ENCODE measurements at regions of chr18 and their contacts with region 1.

Region 1: DNA sequence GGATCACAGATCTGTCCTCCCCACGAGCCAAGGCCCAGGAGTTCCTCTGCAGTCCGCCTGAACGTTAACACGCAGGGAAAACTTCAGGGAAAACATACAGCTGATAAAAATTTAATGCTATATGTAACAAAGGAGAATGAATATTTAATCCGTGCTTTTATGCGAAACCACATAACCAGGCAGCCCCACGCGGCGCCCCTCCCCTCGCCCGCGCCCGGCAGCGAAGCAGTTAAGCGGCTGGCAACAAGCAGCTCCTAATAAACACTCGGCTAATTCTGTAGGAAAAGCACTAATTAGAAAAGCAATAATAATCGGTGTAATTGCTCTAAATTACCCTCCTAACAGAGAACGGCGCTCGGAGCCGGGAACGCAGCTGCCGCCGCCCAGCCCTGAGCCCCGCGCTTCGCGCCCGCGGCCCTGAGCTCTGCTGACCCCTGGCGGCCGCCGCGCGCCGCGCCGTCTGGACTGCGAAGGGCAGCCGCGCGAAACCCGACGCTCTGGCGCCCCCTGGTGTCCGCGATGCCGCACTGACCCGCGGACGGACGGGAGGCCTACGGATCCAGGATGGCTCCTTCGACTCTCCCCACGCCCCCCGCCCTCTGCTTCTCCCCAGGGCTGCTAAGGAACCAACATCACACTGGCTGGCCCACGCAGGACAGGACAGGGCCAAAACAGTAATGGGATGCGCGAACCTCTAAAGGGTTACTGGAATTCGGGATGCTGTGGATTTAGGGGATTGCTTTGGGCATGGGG is 181.4 kb downstream of the SMAD2 start:
- DNase-seq: peak; percentile 91
- ATAC-seq: peak; percentile 97
- H3K4me3 Mint-ChIP-seq: peak overlapping the region; percentile 10
- H3K27ac Mint-ChIP-seq: no peak overlapping the region
- H3K4me1 Mint-ChIP-seq: no peaks in the 10 kb centered on the region
- H3K27me3 Mint-ChIP-seq: peaks cover 3% of the 10 kb centered on the region

Region 2: GRCh38 chr18:47050468-47050867 is 698.6 kb before region 1 on chr18:
- CTCF ChIA-PET with region 1: interaction called, 4 read pairs
- POLR2A ChIA-PET with region 1: no interaction called
- intact Hi-C with region 1: loop called (anchors 1 to 2 kb)
- DNase-seq: peak; percentile 10
- ATAC-seq: peak; percentile 47
- H3K4me3 Mint-ChIP-seq: no peak overlapping the region
- H3K27ac Mint-ChIP-seq: no peak overlapping the region
- H3K4me1 Mint-ChIP-seq: no peaks in the 10 kb centered on the region
- H3K27me3 Mint-ChIP-seq: peaks cover 3% of the 10 kb centered on the region

Region 3: DNA sequence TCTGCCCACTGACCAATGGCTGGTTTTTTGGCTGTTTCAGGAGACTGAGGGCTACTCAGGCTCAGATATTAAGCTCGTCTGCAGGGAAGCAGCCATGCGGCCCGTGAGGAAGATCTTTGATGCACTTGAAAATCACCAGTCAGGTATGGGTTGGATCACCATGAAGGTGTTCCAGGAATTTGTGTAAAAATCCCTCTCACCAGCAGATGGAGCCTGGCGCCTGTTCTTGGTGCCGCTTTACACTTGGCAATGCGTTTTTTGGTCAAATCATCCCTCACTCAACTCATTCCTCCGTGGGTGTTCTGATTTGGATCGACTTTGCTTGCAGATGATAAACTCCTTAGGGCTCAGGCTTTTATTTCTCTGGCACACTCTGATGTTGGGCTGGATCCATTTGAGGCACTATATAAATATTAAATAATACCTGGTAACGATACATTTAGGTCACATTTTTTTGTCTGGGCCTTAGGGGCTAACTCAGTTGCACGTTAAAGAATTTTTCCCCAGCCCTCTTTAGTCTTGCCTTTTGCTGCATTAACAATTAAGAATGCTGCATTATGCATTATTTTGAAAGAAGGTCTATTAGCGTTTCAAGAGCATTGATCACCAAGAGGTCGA is 648.7 kb before region 1 on chr18:
- CTCF ChIA-PET with region 1: interaction called, 9 read pairs
- POLR2A ChIA-PET with region 1: interaction called, 3 read pairs
- intact Hi-C with region 1: loop called (anchors 1 to 2 kb)
- DNase-seq: peak; percentile 78
- ATAC-seq: peak; percentile 77
- H3K4me3 Mint-ChIP-seq: no peak overlapping the region
- H3K27ac Mint-ChIP-seq: no peak overlapping the region
- H3K4me1 Mint-ChIP-seq: no peaks in the 10 kb centered on the region
- H3K27me3 Mint-ChIP-seq: no peaks in the 10 kb centered on the region

Region 4: DNA sequence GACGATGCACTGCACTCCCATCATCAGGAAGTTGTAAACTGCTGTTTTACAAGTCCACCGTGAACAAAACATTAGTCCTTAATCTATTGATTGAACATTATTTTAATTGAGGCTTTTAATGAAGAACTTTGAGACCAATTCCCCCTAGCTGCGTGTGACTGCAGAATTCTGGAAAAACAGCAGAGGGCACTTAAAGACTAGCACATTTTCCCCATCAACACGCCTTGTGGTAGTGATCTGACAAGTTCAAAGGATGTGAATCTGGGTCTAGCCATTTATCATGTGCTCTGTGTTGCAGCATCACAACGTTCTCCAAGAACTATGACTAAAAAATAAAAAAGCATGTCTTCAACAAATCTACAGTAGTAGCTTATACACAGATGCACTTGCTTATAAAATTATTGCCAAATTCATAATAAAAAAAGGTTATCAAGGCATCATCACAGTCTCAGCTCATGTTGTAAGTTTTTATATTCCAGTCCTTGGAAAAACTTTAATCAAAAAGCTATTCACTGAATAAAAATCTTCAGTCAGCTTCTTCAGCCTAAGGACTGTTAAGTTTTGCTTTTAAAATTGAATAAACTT is 533.4 kb before region 1 on chr18:
- CTCF ChIA-PET with region 1: interaction called, 20 read pairs
- POLR2A ChIA-PET with region 1: no interaction called
- intact Hi-C with region 1: loop called (anchors 1 kb)
- DNase-seq: peak; percentile 26
- ATAC-seq: peak; percentile 71
- H3K4me3 Mint-ChIP-seq: no peak overlapping the region
- H3K27ac Mint-ChIP-seq: no peak overlapping the region
- H3K4me1 Mint-ChIP-seq: no peaks in the 10 kb centered on the region
- H3K27me3 Mint-ChIP-seq: peaks cover 42% of the 10 kb centered on the region

Region 5: GRCh38 chr18:47397671-47398319 is 351.2 kb before region 1 on chr18:
- CTCF ChIA-PET with region 1: interaction called, 14 read pairs
- POLR2A ChIA-PET with region 1: no interaction called
- intact Hi-C with region 1: loop called (anchors 1 to 5 kb)
- DNase-seq: peak; percentile 56
- ATAC-seq: no peak
- H3K4me3 Mint-ChIP-seq: no peak overlapping the region
- H3K27ac Mint-ChIP-seq: no peak overlapping the region
- H3K4me1 Mint-ChIP-seq: no peaks in the 10 kb centered on the region
- H3K27me3 Mint-ChIP-seq: peaks cover 4% of the 10 kb centered on the region

Region 6: GRCh38 chr18:47595815-47596496 is 153.1 kb before region 1 on chr18:
- CTCF ChIA-PET with region 1: interaction called, 4 read pairs
- POLR2A ChIA-PET with region 1: no interaction called
- intact Hi-C with region 1: loop called (anchors 1 kb)
- DNase-seq: peak; percentile 49
- ATAC-seq: no peak
- H3K4me3 Mint-ChIP-seq: no peak overlapping the region
- H3K27ac Mint-ChIP-seq: no peak overlapping the region
- H3K4me1 Mint-ChIP-seq: no peaks in the 10 kb centered on the region
- H3K27me3 Mint-ChIP-seq: peaks cover 31% of the 10 kb centered on the region

Region 7: GRCh38 chr18:47737956-47738355 is 11.1 kb before region 1 on chr18:
- CTCF ChIA-PET with region 1: interaction called, 23 read pairs
- POLR2A ChIA-PET with region 1: no interaction called
- intact Hi-C with region 1: no loop called
- DNase-seq: no peak
- ATAC-seq: no peak
- H3K4me3 Mint-ChIP-seq: no peak overlapping the region
- H3K27ac Mint-ChIP-seq: no peak overlapping the region
- H3K4me1 Mint-ChIP-seq: no peaks in the 10 kb centered on the region
- H3K27me3 Mint-ChIP-seq: peaks cover 22% of the 10 kb centered on the region

Measured in activated CD4-positive, alpha-beta T cell treated with anti-CD3 and anti-CD28 coated beads for 36 hours (primary cell).